Activated naive CD4-positive, alpha-beta T cell treated with anti-CD3 and anti-CD28 coated beads for 36 hours (primary cell): ENCODE measurements at regions of chr19 and their contacts with region 1.

Region 1: DNA sequence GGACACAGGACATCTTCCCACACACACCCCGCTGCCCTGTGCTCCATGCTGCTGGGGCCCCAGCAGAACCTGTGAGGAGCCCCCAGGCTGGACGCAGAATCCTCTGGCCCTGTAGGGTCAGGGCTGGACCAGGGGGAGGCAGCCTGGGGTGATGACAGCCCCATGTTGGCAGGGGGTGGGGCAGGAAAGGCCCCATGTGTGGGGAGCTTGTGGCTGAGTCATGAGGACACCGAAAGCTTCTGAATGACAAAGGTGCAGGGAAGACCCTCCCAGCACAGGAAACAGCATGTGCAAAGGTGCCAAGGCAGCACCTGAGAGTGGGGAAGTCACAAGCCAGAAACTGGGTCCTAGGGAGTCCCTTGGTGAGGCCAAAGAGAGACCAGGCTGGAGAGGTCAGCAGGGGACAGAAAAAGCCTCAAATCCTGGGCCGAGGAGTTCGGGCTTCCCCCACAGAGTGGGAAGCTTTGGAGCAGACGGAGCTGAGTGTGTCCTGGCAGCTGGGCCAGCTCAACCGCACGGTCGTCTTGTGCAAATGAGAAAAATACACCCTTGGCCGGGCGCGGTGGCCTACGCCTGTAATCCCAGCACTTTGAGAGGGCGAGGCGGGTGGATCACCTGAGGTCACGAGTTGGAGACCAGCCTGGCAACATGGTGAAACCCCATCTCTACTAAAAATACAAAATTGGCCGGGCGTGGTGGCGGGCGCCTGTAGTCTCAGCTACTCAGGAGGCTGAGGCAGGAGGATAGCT is 17.5 kb downstream of the ATP8B3 start:
- DNase-seq: peak; percentile 28
- H3K4me3 Mint-ChIP-seq: no peak overlapping the region
- H3K27ac Mint-ChIP-seq: no peak overlapping the region
- H3K4me1 Mint-ChIP-seq: peaks cover 5% of the 10 kb centered on the region
- H3K27me3 Mint-ChIP-seq: peaks cover 18% of the 10 kb centered on the region

Region 2: DNA sequence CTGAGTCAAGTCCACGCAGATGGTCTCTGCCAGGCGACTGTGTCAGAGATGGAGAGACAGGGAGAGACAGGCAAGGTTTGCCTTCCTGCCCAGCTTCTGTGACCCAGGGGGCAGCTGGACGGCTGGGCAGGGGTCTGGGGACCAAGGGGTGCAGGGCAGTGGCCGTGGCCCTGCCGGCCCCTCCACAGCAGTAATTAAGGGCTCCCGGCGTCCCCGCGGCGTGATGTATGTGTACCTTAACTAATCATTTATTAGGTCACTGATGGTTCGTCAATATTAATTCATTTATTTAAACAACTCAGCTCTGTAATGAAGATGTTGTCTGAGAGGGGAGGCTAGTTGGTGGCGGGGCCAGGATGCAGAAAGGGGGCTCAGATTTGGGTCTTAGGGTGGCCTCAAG is 113.6 kb before region 1 on chr19:
- CTCF ChIA-PET with region 1: no interaction called
- intact Hi-C with region 1: no loop called
- DNase-seq: no peak
- H3K4me3 Mint-ChIP-seq: no peak overlapping the region
- H3K27ac Mint-ChIP-seq: no peak overlapping the region
- H3K4me1 Mint-ChIP-seq: no peaks in the 10 kb centered on the region
- H3K27me3 Mint-ChIP-seq: peaks cover 34% of the 10 kb centered on the region

Region 3: DNA sequence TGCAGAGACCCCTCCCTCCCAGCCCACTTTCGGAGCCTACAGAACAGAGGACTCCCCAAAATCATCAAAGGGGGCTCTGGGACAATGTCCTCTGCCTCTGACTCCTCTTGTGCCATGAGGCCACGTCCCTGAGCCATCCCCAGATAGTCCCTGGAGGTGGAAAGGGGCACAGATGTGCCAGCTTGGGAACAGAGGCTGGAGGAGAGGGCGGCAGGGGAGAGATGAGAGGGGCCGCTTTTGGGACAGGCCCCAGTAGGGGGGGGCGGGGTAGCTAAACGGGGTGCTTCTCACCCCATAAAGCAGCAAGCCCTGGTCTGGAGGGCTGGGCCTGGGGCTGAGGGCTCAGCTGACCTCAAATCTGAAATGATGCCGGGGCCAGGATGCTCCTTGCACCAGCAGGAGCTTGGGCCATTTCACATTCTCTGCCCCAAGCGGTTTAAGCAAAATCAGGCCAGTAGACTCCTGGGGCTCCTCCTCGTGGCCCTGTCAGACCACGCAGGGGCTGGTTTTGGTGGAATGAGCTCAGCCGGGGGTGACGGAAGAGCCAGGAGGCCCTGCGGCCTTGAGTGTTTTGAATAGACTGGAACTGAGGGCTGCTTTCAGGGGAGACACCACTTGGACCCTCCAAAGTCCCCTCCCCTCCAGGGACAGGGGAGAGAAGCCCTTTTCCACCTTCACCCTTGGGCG is 14.2 kb before region 1 on chr19:
- CTCF ChIA-PET with region 1: interaction called, 39 read pairs
- intact Hi-C with region 1: no loop called
- DNase-seq: no peak
- H3K4me3 Mint-ChIP-seq: no peak overlapping the region
- H3K27ac Mint-ChIP-seq: no peak overlapping the region
- H3K4me1 Mint-ChIP-seq: no peaks in the 10 kb centered on the region
- H3K27me3 Mint-ChIP-seq: peaks cover 56% of the 10 kb centered on the region